ENCODE measurements at regions of chr12 and their contacts with region 1.

Region 1: DNA sequence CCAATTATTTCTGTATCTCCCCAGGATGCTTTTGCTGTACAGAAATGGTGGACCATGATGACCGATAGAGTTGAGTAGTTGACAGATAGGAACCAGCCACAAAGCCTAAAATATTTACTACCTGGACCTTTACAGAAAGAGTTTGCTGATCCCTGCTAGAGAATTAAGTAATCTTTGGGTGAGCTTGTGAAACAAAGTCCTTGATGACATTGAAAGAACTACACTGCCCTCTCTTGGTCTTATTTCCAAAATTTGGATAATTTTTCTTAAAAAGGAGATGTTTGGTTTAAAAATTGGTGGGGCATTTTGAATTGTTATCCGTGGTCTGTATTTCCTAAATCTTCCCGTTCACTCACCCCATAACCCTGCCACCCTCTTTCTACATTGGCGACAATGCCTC is 13.7 kb upstream of the TCTN1 start:
- DNase-seq: no peak
- H3K4me3 ChIP-seq: no peak overlapping the region
- H3K27me3 ChIP-seq: no peaks in the 10 kb centered on the region
- CTCF ChIP-seq: peak; percentile 32; the same call in 1 of the 2 replicates

Region 2: DNA sequence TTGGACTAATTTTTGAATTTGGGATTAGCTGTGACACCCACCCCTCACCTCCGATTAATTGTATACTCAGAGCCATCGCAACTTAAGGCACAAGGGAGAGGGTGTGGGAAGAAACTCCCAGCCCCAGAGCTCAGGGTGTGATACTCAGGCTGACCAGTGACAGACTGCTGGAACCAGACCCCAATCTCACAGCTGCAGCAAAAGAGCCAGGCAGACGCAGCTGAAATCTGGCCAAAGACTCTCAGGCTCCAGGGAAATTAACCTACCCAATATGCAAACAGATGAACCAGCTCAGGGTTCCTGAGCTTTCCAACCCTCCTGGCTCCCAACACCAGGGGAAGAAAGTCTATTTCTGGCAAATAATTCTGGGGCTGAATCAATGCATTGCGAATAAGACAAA is 227.2 kb before region 1 on chr12:
- CTCF ChIA-PET with region 1: no interaction called
- POLR2A ChIA-PET with region 1: no interaction called
- DNase-seq: no peak
- H3K4me3 ChIP-seq: no peak overlapping the region
- H3K27me3 ChIP-seq: no peaks in the 10 kb centered on the region
- CTCF ChIP-seq: no peak

Region 3: GRCh38 chr12:110449799-110450497 is 150.3 kb before region 1 on chr12 and contains the start of gene ARPC3:
- CTCF ChIA-PET with region 1: interaction called, 106 read pairs
- POLR2A ChIA-PET with region 1: interaction called, 3 read pairs
- DNase-seq: peak; percentile 61
- H3K4me3 ChIP-seq: peak within 1 kb of the TSS; percentile 100
- H3K27me3 ChIP-seq: no peaks in the 10 kb centered on the region
- CTCF ChIP-seq: peak; percentile 94
- polyA plus RNA-seq, gene ARPC3: 22.7 and 50.9 TPM in 2 replicates

Region 4: GRCh38 chr12:110501752-110502738 is 98.2 kb before region 1 on chr12 and contains the starts of genes RAD9B and VPS29:
- CTCF ChIA-PET with region 1: interaction called, 340 read pairs
- POLR2A ChIA-PET with region 1: no interaction called
- DNase-seq: peak; percentile 90
- H3K4me3 ChIP-seq: peak within 1 kb of the TSS; percentile 95
- H3K27me3 ChIP-seq: no peaks in the 10 kb centered on the region
- CTCF ChIP-seq: no peak
- polyA plus RNA-seq, gene RAD9B: 0.33 and 0.69 TPM in 2 replicates
- polyA plus RNA-seq, gene VPS29: 98.8 and 148 TPM in 2 replicates

Region 5: GRCh38 chr12:110528277-110528839 is 71.9 kb before region 1 on chr12:
- CTCF ChIA-PET with region 1: interaction called, 16 read pairs
- POLR2A ChIA-PET with region 1: no interaction called
- DNase-seq: no peak
- H3K4me3 ChIP-seq: no peak overlapping the region
- H3K27me3 ChIP-seq: no peaks in the 10 kb centered on the region
- CTCF ChIP-seq: no peak

Region 6: GRCh38 chr12:110546339-110546738 is 53.9 kb before region 1 on chr12:
- CTCF ChIA-PET with region 1: interaction called, 62 read pairs
- POLR2A ChIA-PET with region 1: no interaction called
- DNase-seq: peak; percentile 92
- H3K4me3 ChIP-seq: no peak overlapping the region
- H3K27me3 ChIP-seq: no peaks in the 10 kb centered on the region
- CTCF ChIP-seq: no peak

Region 7: DNA sequence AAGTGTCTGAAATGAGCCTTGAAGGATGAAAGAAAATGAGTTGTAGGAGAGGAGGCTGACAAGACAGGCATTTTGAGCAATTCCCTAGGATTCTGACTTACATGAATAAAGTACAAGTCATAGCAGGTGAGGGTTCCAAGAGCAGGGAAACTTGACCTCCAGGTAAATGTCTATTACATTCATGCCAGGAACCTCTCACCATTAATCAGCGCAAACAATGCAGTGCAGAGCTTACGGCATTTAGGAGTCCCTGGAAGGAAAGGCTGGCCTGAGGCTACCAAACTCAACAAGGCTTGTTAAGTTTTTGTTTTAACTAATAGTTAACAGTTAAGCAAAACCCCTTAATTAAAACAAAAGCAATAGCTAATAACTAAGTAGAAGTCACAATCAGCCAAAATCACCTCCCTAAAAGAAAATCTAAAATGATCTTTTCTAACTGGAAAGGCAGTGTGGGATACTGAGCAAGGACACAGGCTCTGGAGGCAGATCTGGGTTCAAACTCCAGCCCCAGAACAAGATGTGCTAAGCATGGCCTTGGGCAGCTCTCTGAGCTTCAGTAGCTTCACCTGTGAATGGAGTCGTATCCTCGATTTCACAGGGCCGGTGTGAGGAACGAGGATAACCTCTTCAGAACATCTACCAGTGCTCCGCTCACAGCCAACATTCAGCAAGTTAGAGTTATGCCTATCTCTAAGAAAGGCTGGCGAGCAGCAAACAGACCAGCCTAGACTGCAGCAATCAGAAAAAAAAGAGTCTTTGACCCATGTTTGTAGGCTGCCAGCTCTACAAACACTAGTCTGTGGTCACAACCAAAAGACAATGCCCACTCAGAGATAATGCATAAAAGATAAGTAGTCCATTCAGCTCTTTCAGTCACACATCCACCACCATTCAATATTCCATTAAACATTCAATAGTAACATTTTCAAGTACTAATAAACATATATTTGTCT is 34.1 kb before region 1 on chr12:
- CTCF ChIA-PET with region 1: no interaction called
- POLR2A ChIA-PET with region 1: no interaction called
- DNase-seq: no peak
- H3K4me3 ChIP-seq: no peak overlapping the region
- H3K27me3 ChIP-seq: no peaks in the 10 kb centered on the region
- CTCF ChIP-seq: no peak

Region 8: DNA sequence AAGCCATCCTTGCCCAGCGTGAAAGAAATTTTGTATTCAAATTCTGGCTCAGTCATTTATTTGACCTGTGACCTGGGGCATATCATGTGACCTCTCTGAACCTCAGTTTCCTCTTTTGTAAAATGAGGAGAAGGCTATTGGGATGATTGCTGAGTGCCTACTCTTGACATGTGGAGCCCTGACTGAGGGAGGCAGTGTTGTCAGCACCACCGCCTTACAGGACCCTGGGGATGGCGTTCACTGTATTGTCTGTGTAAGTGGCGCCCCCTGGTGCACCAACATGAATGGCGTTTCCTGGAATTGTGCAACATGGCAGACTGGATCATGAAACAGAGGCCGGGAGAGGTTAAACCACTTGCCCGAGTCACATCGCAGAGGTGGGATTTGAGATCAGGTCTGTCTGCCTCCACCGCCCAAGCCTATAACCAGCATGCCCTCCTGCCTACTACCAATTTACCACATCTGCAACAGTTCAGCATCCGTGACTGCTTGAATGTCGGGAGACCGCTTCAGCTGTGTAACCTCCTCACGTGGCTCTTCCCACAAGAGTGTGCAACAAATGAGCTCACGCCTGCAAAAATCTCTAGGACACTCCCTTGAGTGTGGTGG is 226.4 kb after region 1 on chr12:
- CTCF ChIA-PET with region 1: interaction called, 11 read pairs
- POLR2A ChIA-PET with region 1: no interaction called
- DNase-seq: peak; percentile 10
- H3K4me3 ChIP-seq: peak overlapping the region; percentile 10; the same call in 1 of the 2 replicates
- H3K27me3 ChIP-seq: 0 out of 2 replicates have a peak, but pooled peaks cover 2% of the 10 kb centered on the region
- CTCF ChIP-seq: peak; percentile 85

Measured in BJ (cell line).